Endothelial cell of umbilical vein (primary cell): ENCODE measurements at regions of chr2 and their contacts with region 1.

Region 1: GRCh38 chr2:46915811-46916630 is 415 bp upstream of the MCFD2 start:
- DNase-seq: peak; percentile 91
- H3K4me3 ChIP-seq: peak overlapping the region; percentile 12 to 72 (median 67)
- H3K27ac ChIP-seq: peak overlapping the region; percentile 83
- H3K4me1 ChIP-seq: peaks cover 26% of the 10 kb centered on the region
- H3K27me3 ChIP-seq: no peaks in the 10 kb centered on the region
- CTCF ChIP-seq: no peak
- POLR2A ChIP-seq: peak; percentile 46

Region 2: DNA sequence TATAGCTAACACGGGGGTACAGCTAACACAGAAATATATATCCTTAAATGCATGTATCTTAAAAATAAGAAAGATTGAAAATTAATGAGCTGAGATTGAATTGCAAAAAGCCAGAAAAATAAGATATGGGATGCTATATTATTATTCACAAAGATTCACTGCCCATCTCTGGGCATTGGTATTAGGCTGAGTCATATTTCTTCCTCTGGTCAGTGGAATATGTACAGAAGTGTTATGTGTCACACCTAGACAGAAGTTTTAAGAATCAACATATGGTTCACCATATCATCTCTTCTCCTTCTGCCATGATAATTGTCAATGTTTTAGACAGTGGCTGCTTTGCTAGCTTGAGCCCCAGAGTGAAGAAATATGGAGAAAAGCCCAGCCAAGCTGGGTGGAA is 13.6 kb after region 1 on chr2:
- CTCF ChIA-PET with region 1: interaction called, 18 read pairs
- POLR2A ChIA-PET with region 1: no interaction called
- dilution Hi-C with region 1: no loop called
- intact Hi-C with region 1: no loop called
- DNase-seq: no peak
- H3K4me3 ChIP-seq: no peak overlapping the region
- H3K27ac ChIP-seq: no peak overlapping the region
- H3K4me1 ChIP-seq: no peaks in the 10 kb centered on the region
- H3K27me3 ChIP-seq: no peaks in the 10 kb centered on the region
- CTCF ChIP-seq: no peak
- POLR2A ChIP-seq: no peak

Region 3: DNA sequence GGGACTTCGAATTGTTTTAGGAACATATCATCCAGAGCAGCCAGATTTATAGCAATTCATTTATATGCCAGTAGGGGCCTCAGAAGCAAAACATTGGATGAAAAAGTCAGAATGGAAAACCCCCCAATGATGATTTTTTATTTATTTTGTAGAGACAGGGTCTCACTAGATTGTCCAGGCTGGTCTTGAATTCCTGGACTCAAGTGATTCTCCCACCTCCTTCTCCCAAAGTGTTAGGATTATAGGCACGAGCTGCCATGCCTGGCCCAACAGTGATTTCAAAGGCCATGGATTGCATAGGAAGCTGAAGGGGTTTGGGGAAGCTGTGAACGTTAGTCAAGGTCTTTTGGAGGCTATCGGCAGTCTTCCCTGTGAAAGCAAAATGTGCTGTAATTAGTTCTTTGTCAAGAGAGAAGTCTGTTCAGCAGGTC is 21.5 kb after region 1 on chr2:
- CTCF ChIA-PET with region 1: interaction called, 27 read pairs
- POLR2A ChIA-PET with region 1: no interaction called
- dilution Hi-C with region 1: no loop called
- intact Hi-C with region 1: no loop called
- DNase-seq: no peak
- H3K4me3 ChIP-seq: no peak overlapping the region
- H3K27ac ChIP-seq: no peak overlapping the region
- H3K4me1 ChIP-seq: peaks cover 11% of the 10 kb centered on the region
- H3K27me3 ChIP-seq: no peaks in the 10 kb centered on the region
- CTCF ChIP-seq: peak; percentile 15 to 32
- POLR2A ChIP-seq: no peak

Region 4: DNA sequence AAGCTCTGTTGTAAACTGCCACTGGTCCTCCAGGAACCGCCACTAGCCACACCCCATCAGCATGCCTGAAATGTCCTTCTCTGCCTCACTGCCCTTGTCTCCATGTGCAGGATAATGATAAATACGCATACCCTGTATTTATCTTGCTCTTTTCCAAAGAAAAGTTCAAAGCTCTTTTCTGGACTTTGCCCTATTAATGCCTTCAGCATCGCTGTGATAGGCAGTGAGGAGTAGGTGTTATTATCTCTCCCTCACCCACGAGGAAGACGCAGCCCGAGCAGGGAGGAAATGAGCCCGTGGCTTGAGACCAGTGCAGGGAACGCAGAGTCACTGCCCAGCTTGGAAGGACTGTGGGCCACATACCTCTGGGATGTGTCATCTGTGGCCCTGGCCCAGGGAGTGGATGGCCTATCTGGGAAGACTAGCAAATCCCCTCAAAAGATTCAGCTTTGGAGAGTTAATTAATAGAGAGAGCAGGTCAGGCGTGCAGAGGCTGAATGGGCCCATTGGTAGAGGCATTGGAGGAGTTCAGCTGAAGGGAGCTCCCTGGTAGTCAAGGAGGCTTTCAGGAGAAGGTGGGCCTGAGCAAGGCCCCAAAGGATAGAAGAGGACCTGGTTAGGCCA is 39.0 kb after region 1 on chr2:
- CTCF ChIA-PET with region 1: interaction called, 5 read pairs
- POLR2A ChIA-PET with region 1: no interaction called
- dilution Hi-C with region 1: no loop called
- intact Hi-C with region 1: loop called (anchors 1 kb)
- DNase-seq: peak; percentile 76
- H3K4me3 ChIP-seq: no peak overlapping the region
- H3K27ac ChIP-seq: peak overlapping the region; percentile 73
- H3K4me1 ChIP-seq: peaks cover 17% of the 10 kb centered on the region
- H3K27me3 ChIP-seq: no peaks in the 10 kb centered on the region
- CTCF ChIP-seq: no peak
- POLR2A ChIP-seq: no peak

Region 5: GRCh38 chr2:47145466-47145865 is 229.4 kb after region 1 on chr2:
- CTCF ChIA-PET with region 1: no interaction called
- POLR2A ChIA-PET with region 1: no interaction called
- dilution Hi-C with region 1: no loop called
- intact Hi-C with region 1: no loop called
- DNase-seq: no peak
- H3K4me3 ChIP-seq: no peak overlapping the region
- H3K27ac ChIP-seq: no peak overlapping the region
- H3K4me1 ChIP-seq: no peaks in the 10 kb centered on the region
- H3K27me3 ChIP-seq: no peaks in the 10 kb centered on the region
- CTCF ChIP-seq: no peak
- POLR2A ChIP-seq: no peak

Region 6: DNA sequence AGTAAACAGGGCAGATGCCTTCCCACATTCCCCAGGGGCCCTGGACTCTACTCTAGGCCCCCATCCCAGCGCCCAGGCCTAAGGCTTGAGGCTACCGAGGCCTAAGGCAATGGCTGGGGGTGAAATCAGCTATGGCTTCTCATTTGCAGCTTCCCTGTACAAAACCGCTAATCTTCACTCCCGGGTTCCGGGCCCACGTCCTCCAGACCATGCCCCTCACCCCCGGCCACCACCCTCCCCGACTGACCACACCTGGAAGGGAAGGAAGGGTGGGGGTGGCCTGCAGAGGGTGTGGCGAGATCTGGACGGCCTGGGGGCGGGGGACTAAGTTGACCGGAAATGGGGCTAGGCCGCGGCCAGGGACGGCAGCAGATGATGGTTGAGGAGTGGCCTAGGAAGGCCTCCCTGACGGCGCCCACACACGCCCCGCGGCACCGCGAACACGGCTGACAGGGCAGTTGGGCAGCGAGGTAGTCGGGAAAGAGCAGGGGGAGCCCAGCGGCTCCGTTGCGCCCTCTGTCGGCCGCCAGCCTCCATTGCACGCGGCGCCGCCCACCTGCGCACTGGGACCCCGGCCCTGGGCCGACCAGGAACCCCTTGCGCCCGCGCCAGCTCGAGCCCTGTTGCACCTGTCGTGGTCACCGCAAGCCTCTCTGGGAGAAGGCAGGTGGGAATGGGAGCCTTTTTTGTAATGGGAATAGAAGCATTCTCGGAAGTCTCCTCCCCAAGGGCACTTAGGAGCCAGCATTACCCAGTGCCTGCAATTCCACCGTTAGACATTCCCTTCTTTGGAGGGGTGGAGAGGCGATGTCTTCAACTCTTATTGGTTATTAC is 356.2 kb after region 1 on chr2:
- CTCF ChIA-PET with region 1: no interaction called
- POLR2A ChIA-PET with region 1: no interaction called
- dilution Hi-C with region 1: no loop called
- intact Hi-C with region 1: loop called (anchors 1 kb)
- DNase-seq: peak; percentile 46
- H3K4me3 ChIP-seq: peak overlapping the region in 2 of 3 experiments; percentile 11 to 33
- H3K27ac ChIP-seq: peak overlapping the region; percentile 34
- H3K4me1 ChIP-seq: peaks cover 23% of the 10 kb centered on the region
- H3K27me3 ChIP-seq: no peaks in the 10 kb centered on the region
- CTCF ChIP-seq: peak; percentile 96 to 99
- POLR2A ChIP-seq: no peak